Prostate gland (tissue), 2 donors: ENCODE measurements at regions of chr20 and their contacts with region 1.

Region 1: GRCh38 chr20:44683263-44684046 is 31.7 kb upstream of the CCN5 start:
- DNase-seq: peak; percentile 47
- H3K4me3 ChIP-seq: no peak overlapping the region
- H3K27ac ChIP-seq: no peak overlapping the region
- H3K4me1 ChIP-seq: no peaks in the 10 kb centered on the region
- H3K27me3 ChIP-seq: no peaks in the 10 kb centered on the region
- CTCF ChIP-seq: peak in 3 of 4 experiments; percentile 28 to 72 (median 41)
- POLR2A ChIP-seq: no peak

Region 2: GRCh38 chr20:44388466-44389023 is 294.9 kb before region 1 on chr20:
- intact Hi-C with region 1: loop called (anchors 5 kb)
- DNase-seq: peak; percentile 32
- H3K4me3 ChIP-seq: no peak overlapping the region
- H3K27ac ChIP-seq: no peak overlapping the region
- H3K4me1 ChIP-seq: no peaks in the 10 kb centered on the region
- H3K27me3 ChIP-seq: peaks cover 3% of the 10 kb centered on the region
- CTCF ChIP-seq: peak; percentile 55 to 80 (median 60)
- POLR2A ChIP-seq: no peak

Region 3: GRCh38 chr20:44475694-44476560 is 207.5 kb before region 1 on chr20 and contains the start of gene TTPAL:
- intact Hi-C with region 1: loop called (anchors 5 kb)
- DNase-seq: peak; percentile 87
- H3K4me3 ChIP-seq: peak within 1 kb of the TSS; percentile 83 to 95
- H3K27ac ChIP-seq: peak within 1 kb of the TSS; percentile 90
- H3K4me1 ChIP-seq: no peaks in the 10 kb centered on the region
- H3K27me3 ChIP-seq: no peaks in the 10 kb centered on the region
- CTCF ChIP-seq: peak in 3 of 4 experiments; percentile 61 to 82 (median 78)
- POLR2A ChIP-seq: peak; percentile 97
- total RNA-seq, gene TTPAL: 11.8 to 14.8 TPM

Region 4: GRCh38 chr20:44733341-44734069 is 50.0 kb after region 1 on chr20:
- intact Hi-C with region 1: loop called (anchors 1 kb)
- DNase-seq: peak; percentile 70
- H3K4me3 ChIP-seq: no peak overlapping the region
- H3K27ac ChIP-seq: no peak overlapping the region
- H3K4me1 ChIP-seq: peaks cover 3% of the 10 kb centered on the region
- H3K27me3 ChIP-seq: no peaks in the 10 kb centered on the region
- CTCF ChIP-seq: peak; percentile 84 to 96 (median 94)
- POLR2A ChIP-seq: no peak

Region 5: GRCh38 chr20:44837946-44838345 is 154.5 kb after region 1 on chr20:
- intact Hi-C with region 1: no loop called
- DNase-seq: no peak
- H3K4me3 ChIP-seq: no peak overlapping the region
- H3K27ac ChIP-seq: no peak overlapping the region
- H3K4me1 ChIP-seq: no peaks in the 10 kb centered on the region
- H3K27me3 ChIP-seq: peaks cover 3% of the 10 kb centered on the region
- CTCF ChIP-seq: no peak
- POLR2A ChIP-seq: no peak

Region 6: DNA sequence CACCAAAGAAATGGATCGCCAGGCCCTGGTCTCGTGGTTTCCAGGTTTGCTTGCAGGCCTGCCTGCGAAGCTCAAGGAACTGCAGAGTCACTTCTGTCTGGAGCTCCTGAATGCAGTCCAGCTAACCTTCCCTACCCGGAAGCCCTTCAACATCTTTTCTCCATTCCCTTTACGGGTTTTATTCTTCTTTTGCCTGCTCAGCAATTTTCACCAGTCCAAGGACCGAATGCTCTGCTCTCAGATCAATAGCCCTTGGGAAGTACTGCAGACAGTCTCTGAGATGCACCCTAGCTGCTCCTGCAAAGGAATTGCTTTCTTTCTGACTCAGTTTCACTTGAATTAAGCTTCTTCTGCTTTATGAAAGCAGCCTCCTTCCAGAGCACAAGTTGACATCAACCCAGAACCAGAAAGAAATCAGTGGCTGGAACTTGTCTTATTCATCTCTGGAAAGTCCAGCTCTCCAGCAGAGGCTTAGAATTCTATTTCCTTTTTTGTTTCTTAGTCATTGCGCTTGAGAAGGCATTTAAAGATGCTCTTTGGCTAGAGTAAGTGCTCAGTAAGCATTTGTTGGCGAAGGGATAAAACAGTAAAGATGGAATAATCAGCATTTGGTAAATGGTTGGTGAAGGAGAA is 183.4 kb after region 1 on chr20:
- intact Hi-C with region 1: loop called (anchors 5 kb)
- DNase-seq: no peak
- H3K4me3 ChIP-seq: no peak overlapping the region
- H3K27ac ChIP-seq: no peak overlapping the region
- H3K4me1 ChIP-seq: no peaks in the 10 kb centered on the region
- H3K27me3 ChIP-seq: no peaks in the 10 kb centered on the region
- CTCF ChIP-seq: no peak
- POLR2A ChIP-seq: no peak

Region 7: GRCh38 chr20:44959082-44959637 is 275.7 kb after region 1 on chr20:
- intact Hi-C with region 1: no loop called
- DNase-seq: no peak
- H3K4me3 ChIP-seq: peak overlapping the region; percentile 68 to 72
- H3K27ac ChIP-seq: peak overlapping the region; percentile 38 to 77
- H3K4me1 ChIP-seq: peaks cover 3% of the 10 kb centered on the region
- H3K27me3 ChIP-seq: no peaks in the 10 kb centered on the region
- CTCF ChIP-seq: no peak
- POLR2A ChIP-seq: no peak